Heart right ventricle (tissue), 16 donors: ENCODE measurements at regions of chr5 and their contacts with region 1.

Region 1: GRCh38 chr5:139137702-139138101 is 60.5 kb downstream of the SIL1 start:
- DNase-seq: no peak
- ATAC-seq: peak in 5 of 8 donors; percentile 18 to 40 (median 29)
- H3K4me3 ChIP-seq: no peak overlapping the region
- H3K27ac ChIP-seq: peak overlapping the region in 1 of 10 donors; percentile 65
- H3K4me1 ChIP-seq: peaks cover 10 to 70% (median 50%) of the 10 kb centered on the region in 9 donors
- H3K27me3 ChIP-seq: no peaks in the 10 kb centered on the region
- CTCF ChIP-seq: peak in 7 of 9 donors; percentile 13 to 32 (median 23)

Region 2: GRCh38 chr5:138975098-138975847 is 162.4 kb before region 1 on chr5:
- intact Hi-C with region 1: loop called in 1 of 10 experiments (anchors 10 kb)
- DNase-seq: peak; percentile 26 to 73
- ATAC-seq: peak; percentile 28 to 72 (median 42)
- H3K4me3 ChIP-seq: no peak overlapping the region
- H3K27ac ChIP-seq: peak overlapping the region; percentile 77 to 93 (median 82)
- H3K4me1 ChIP-seq: peaks cover 15 to 54% (median 44%) of the 10 kb centered on the region in 9 donors
- H3K27me3 ChIP-seq: no peaks in the 10 kb centered on the region
- CTCF ChIP-seq: no peak

Region 3: DNA sequence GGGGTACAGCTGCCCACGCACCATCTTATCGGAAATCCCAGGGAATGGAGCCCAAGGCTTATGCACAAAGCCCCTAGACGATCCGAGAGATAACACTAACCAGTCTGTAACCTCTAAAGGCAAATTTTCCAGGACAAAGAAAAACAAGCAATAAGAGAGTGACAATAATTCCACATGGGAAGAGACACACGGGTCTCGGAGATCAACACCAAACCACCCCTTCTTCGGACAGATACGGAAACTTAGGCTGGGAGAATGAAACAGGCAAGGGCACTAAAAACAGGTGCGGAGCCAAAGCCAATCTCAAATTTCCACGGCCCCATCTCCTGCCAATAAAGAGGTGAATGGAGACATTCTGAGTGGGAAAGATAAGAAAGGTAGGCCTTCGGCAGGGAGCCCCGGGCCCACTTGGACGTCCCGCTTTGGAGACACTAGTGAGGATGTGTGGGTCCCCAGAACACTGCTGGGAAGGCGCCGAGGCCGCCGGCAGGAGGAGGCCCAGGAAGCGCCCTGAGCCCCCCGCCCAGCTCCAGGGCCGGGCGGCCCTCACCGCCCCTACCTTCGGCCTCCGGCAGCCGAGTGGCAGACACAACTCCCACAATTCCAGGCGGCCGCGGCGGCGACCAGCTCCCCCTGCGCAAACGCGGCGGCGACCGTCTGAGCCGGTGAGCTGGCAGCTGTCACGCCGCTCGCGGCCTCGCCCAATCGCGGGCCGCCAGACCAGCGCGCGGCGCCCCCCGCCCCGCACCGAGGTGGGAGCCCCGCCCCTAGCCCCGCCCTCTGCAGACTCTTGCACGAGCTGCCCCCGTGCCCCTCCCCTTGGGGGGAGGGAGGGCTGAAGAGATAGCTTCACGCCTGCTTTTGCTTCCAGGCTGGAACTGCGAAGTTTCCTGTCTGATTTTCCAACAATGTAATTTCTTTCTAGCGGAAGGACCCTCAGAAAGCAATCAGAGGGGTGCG is 60.3 kb after region 1 on chr5 and contains the start of gene SIL1:
- intact Hi-C with region 1: loop called in 1 of 10 experiments (anchors 5 kb)
- DNase-seq: peak; percentile 96 to 99
- ATAC-seq: peak; percentile 99
- H3K4me3 ChIP-seq: peak within 1 kb of the TSS; percentile 51 to 90 (median 80)
- H3K27ac ChIP-seq: peak within 1 kb of the TSS; percentile 42 to 98 (median 95)
- H3K4me1 ChIP-seq: peaks cover 0 to 34% (median 9%) of the 10 kb centered on the region in 9 donors
- H3K27me3 ChIP-seq: no peaks in the 10 kb centered on the region
- CTCF ChIP-seq: peak in 2 of 9 donors; percentile 10 to 18
- total RNA-seq, gene SIL1: 26.7 to 68.1 (median 43.4) TPM